ENCODE measurements at regions of chr9 and their contacts with region 1.

Region 1: GRCh38 chr9:83962173-83962576 is 17.8 kb downstream of the HNRNPK start:
- DNase-seq: no peak
- ATAC-seq: no peak
- H3K4me3 ChIP-seq: no peak overlapping the region
- H3K27ac ChIP-seq: no peak overlapping the region
- H3K4me1 ChIP-seq: no peaks in the 10 kb centered on the region
- H3K27me3 ChIP-seq: no peaks in the 10 kb centered on the region
- CTCF ChIP-seq: no peak
- EP300 ChIP-seq: no peak
- POLR2A ChIP-seq: no peak
- RAD21 ChIP-seq: no peak

Region 2: DNA sequence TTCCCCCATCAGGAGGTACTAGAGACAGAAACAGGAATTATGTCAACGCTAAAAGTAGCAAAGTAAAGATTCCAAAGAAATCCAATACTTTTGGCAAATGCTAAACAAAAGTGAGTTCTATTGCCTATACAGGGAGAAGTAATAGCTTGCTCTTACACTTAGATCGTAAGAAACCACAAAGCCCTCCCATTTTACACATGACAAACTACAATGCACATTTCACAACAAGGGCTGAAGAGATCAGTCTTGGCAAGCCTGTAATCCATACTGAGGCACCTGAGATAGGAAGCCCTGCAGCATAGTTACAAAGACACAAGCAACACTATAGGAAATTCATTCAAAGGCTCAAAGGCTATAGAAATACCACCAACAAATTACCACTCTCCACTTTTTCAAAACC is 10.1 kb after region 1 on chr9:
- CTCF ChIA-PET with region 1: interaction called, 4 read pairs
- POLR2A ChIA-PET with region 1: interaction called, 5 read pairs
- RAD21 ChIA-PET with region 1: interaction called, 3 read pairs
- SMC1A ChIA-PET with region 1: interaction called, 12 read pairs
- in situ Hi-C with region 1: no loop called
- intact Hi-C with region 1: no loop called
- DNase-seq: no peak
- ATAC-seq: peak; percentile 40
- H3K4me3 ChIP-seq: no peak overlapping the region
- H3K27ac ChIP-seq: no peak overlapping the region
- H3K4me1 ChIP-seq: no peaks in the 10 kb centered on the region
- H3K27me3 ChIP-seq: no peaks in the 10 kb centered on the region
- CTCF ChIP-seq: no peak
- EP300 ChIP-seq: no peak
- POLR2A ChIP-seq: no peak
- RAD21 ChIP-seq: no peak

Measured in GM12878 (cell line).